ENCODE measurements at regions of chr14 and their contacts with region 1.

Region 1: DNA sequence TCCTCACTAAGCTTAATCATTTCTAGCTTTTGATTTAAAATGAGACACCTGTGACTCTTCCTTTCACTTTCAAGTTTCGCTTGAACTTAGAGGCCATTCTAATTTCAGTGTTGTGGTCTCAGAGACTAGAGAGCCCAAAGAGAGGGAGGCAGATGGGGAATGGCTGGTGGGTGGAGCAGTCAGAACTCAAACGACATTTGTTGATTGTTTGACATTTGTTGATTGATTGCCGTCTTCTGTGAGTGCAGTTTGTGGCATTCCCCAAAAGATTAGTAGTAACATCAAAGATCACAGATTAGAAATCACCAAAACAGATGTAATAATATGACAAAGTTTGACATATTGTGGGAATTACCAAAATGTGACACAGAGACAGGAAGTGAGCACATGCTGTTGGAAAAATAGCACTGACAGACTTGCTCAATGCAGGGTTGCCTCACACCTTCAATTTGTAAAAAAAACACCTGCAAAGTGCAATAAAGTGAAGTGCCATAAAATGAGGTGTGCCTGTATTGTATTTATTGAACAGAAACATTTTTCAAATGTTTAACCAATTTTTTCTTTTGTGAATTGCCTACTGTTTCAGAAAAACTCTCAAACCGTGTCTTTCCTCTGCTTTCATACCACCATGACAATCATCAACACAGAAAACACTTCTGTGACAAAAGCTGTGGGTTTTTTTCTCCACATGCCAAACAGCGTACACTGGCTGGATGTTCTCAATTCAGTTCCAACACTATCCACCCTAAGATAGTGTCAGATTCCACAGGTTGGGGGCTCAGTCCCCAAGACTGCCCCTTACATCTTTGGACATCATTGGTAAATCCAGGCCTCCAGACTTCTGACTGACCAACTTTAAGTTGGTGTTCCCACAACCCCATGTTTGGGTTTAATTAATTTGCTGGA is 376.3 kb upstream of the RGS6 start:
- DNase-seq: peak; percentile 98
- ATAC-seq: peak; percentile 87
- H3K4me3 ChIP-seq: no peak overlapping the region
- H3K27ac ChIP-seq: peak overlapping the region; percentile 98
- H3K4me1 ChIP-seq: peaks cover 49% of the 10 kb centered on the region
- H3K27me3 ChIP-seq: no peaks in the 10 kb centered on the region
- CTCF ChIP-seq: no peak
- EP300 ChIP-seq: peak; percentile 60 to 87; a peak in 3 of 4 replicates
- POLR2A ChIP-seq: no peak
- RAD21 ChIP-seq: peak; percentile 24; the same call in 1 of the 2 replicates

Region 2: GRCh38 chr14:71320107-71320733 is 235.7 kb before region 1 on chr14:
- CTCF ChIA-PET with region 1: interaction called, 11 read pairs
- POLR2A ChIA-PET with region 1: interaction called, 15 read pairs
- RAD21 ChIA-PET with region 1: interaction called, 151 read pairs
- SMC1A ChIA-PET with region 1: interaction called, 150 read pairs
- in situ Hi-C with region 1: loop called (anchors 5 kb)
- intact Hi-C with region 1: loop called (anchors 1 kb)
- DNase-seq: peak; percentile 96
- ATAC-seq: peak; percentile 79
- H3K4me3 ChIP-seq: peak within 1 kb of the TSS; percentile 98
- H3K27ac ChIP-seq: peak within 1 kb of the TSS; percentile 94
- H3K4me1 ChIP-seq: peaks cover 11% of the 10 kb centered on the region
- H3K27me3 ChIP-seq: no peaks in the 10 kb centered on the region
- CTCF ChIP-seq: no peak
- EP300 ChIP-seq: peak in 1 of 2 experiments; percentile 57; a peak in 2 of 4 replicates
- POLR2A ChIP-seq: peak; percentile 85
- RAD21 ChIP-seq: no peak

Region 3: DNA sequence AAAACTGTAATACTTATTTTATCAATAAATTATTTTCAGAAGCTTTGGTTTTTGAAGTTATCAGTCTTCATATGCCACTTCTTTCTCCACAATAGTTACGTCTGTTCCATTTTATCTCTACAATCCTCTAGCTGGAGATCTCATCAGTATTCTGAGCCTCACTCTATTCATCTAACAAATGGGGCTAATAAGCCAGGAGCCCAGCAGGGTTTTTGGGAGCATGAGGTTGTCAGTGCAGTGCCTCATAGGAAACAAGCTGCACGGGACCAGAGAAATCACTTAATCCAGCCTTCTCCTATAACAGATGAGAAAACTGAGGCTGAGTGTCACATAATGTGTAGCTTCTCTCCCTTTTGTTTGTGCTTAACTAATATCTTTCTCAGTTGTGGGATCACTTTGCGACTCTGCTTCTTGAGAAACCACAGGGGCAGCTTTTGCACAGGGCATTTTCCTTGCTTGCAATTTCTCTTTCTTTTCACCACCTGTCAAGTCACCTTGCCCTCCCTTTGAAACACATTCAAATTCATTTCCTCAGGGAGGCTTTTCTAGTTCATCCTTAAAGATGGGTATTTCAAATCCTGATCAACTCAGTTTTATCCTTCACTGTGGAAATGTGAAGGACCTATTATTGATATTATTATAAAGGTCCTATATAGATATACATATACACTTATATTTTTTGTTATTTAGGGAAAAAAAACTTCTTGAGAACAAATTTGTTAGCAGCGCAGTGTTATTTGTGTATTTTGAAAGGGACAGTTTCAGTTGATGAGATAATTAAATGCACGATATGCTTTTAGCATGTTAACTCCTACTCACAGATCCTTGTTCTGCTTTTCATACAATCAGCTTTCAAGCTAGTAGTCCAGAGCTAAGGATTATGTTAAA is 125.3 kb before region 1 on chr14:
- CTCF ChIA-PET with region 1: interaction called, 6 read pairs
- POLR2A ChIA-PET with region 1: interaction called, 11 read pairs
- RAD21 ChIA-PET with region 1: interaction called, 36 read pairs
- SMC1A ChIA-PET with region 1: interaction called, 57 read pairs
- in situ Hi-C with region 1: no loop called
- intact Hi-C with region 1: no loop called
- DNase-seq: peak; percentile 73
- ATAC-seq: peak; percentile 82
- H3K4me3 ChIP-seq: peak overlapping the region; percentile 58; the same call in 1 of the 2 replicates
- H3K27ac ChIP-seq: peak overlapping the region; percentile 84
- H3K4me1 ChIP-seq: peaks cover 33% of the 10 kb centered on the region
- H3K27me3 ChIP-seq: no peaks in the 10 kb centered on the region
- CTCF ChIP-seq: no peak
- EP300 ChIP-seq: peak; percentile 47 to 60; a peak in 3 of 4 replicates
- POLR2A ChIP-seq: no peak
- RAD21 ChIP-seq: 0 out of 2 replicates have a peak, but pooled peaks have one; percentile 6

Region 4: GRCh38 chr14:71497645-71498086 is 58.2 kb before region 1 on chr14:
- CTCF ChIA-PET with region 1: interaction called, 18 read pairs
- POLR2A ChIA-PET with region 1: interaction called, 21 read pairs
- RAD21 ChIA-PET with region 1: interaction called, 151 read pairs
- SMC1A ChIA-PET with region 1: interaction called, 75 read pairs
- in situ Hi-C with region 1: no loop called
- intact Hi-C with region 1: loop called (anchors 1 kb)
- DNase-seq: peak; percentile 98
- ATAC-seq: peak; percentile 91
- H3K4me3 ChIP-seq: no peak overlapping the region
- H3K27ac ChIP-seq: peak overlapping the region; percentile 94
- H3K4me1 ChIP-seq: peaks cover 43% of the 10 kb centered on the region
- H3K27me3 ChIP-seq: no peaks in the 10 kb centered on the region
- CTCF ChIP-seq: no peak
- EP300 ChIP-seq: peak; percentile 99
- POLR2A ChIP-seq: no peak
- RAD21 ChIP-seq: no peak; the same call in none of the 2 replicates

Region 5: GRCh38 chr14:71591929-71592328 is 36.0 kb after region 1 on chr14:
- CTCF ChIA-PET with region 1: interaction called, 3 read pairs
- POLR2A ChIA-PET with region 1: interaction called, 10 read pairs
- RAD21 ChIA-PET with region 1: interaction called, 30 read pairs
- SMC1A ChIA-PET with region 1: interaction called, 28 read pairs
- in situ Hi-C with region 1: no loop called
- intact Hi-C with region 1: no loop called
- DNase-seq: no peak
- ATAC-seq: peak; percentile 91
- H3K4me3 ChIP-seq: no peak overlapping the region
- H3K27ac ChIP-seq: peak overlapping the region; percentile 61
- H3K4me1 ChIP-seq: peaks cover 13% of the 10 kb centered on the region
- H3K27me3 ChIP-seq: no peaks in the 10 kb centered on the region
- CTCF ChIP-seq: no peak
- EP300 ChIP-seq: no peak
- POLR2A ChIP-seq: no peak
- RAD21 ChIP-seq: no peak

Region 6: GRCh38 chr14:71620401-71620800 is 64.5 kb after region 1 on chr14:
- CTCF ChIA-PET with region 1: interaction called, 3 read pairs
- POLR2A ChIA-PET with region 1: interaction called, 9 read pairs
- RAD21 ChIA-PET with region 1: interaction called, 85 read pairs
- SMC1A ChIA-PET with region 1: interaction called, 48 read pairs
- in situ Hi-C with region 1: no loop called
- intact Hi-C with region 1: loop called (anchors 5 kb)
- DNase-seq: no peak
- ATAC-seq: no peak
- H3K4me3 ChIP-seq: no peak overlapping the region
- H3K27ac ChIP-seq: peak overlapping the region; percentile 28; the same call in 1 of the 2 replicates
- H3K4me1 ChIP-seq: peaks cover 11% of the 10 kb centered on the region; the same call in 1 of the 2 replicates
- H3K27me3 ChIP-seq: no peaks in the 10 kb centered on the region
- CTCF ChIP-seq: no peak
- EP300 ChIP-seq: no peak
- POLR2A ChIP-seq: no peak
- RAD21 ChIP-seq: no peak

Measured in GM12878 (cell line).